ENCODE measurements at regions of chr17 and their contacts with region 1.

Region 1: GRCh38 chr17:29219378-29220047 is 27.1 kb upstream of the CRYBA1 start:
- DNase-seq: peak; percentile 80
- ATAC-seq: peak; percentile 92
- H3K4me3 Mint-ChIP-seq: no peak overlapping the region
- H3K27ac Mint-ChIP-seq: no peak overlapping the region
- H3K4me1 Mint-ChIP-seq: peaks cover 9% of the 10 kb centered on the region
- H3K27me3 Mint-ChIP-seq: peaks cover 3% of the 10 kb centered on the region

Region 2: DNA sequence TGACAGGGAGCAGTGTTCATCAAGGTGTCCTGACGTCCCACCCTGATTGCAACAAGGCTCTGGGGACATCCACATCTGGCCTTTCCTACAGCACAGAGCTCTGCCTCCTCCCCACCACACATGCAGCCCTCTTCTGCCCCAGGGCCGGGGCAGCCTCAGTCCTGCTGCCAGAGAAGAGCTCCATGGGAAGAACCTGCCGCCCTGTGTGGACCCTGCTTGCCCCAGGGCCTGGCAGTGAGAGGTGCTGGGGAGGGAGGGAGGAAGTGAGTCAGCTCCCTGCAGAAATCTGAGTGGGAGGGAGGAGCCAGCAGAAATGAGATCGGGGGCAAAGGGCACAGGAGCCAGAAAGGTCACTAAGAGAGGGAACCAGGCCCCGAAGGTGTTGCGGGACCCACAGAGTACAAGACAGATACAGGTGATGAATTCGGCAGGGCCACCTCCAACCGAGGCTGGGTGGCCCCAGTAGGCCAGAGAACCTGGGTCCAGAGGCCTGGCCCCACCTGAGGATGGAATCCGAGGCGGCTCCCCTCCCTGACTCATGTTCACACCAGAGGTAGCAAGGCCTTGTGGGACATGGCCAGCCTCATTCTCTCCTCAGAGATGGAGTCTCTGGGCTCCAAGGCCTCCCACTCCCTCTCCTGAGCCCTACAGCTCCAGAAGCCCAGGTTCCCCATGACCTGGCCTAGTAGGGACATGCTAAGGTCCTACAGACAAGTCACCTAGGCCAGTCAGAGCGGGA is 64.1 kb before region 1 on chr17:
- CTCF ChIA-PET with region 1: interaction called, 304 read pairs
- DNase-seq: peak; percentile 81
- ATAC-seq: peak; percentile 94
- H3K4me3 Mint-ChIP-seq: peak overlapping the region; percentile 30
- H3K27ac Mint-ChIP-seq: peak overlapping the region; percentile 86
- H3K4me1 Mint-ChIP-seq: peaks cover 50% of the 10 kb centered on the region
- H3K27me3 Mint-ChIP-seq: no peaks in the 10 kb centered on the region

Region 3: GRCh38 chr17:29180034-29180787 is 39.3 kb before region 1 on chr17 and contains the start of gene MYO18A:
- CTCF ChIA-PET with region 1: interaction called, 27 read pairs
- DNase-seq: peak; percentile 84
- ATAC-seq: peak; percentile 94
- H3K4me3 Mint-ChIP-seq: peak within 1 kb of the TSS; percentile 33
- H3K27ac Mint-ChIP-seq: no peak within 1 kb of the TSS
- H3K4me1 Mint-ChIP-seq: peaks cover 34% of the 10 kb centered on the region
- H3K27me3 Mint-ChIP-seq: peaks cover 6% of the 10 kb centered on the region
- total RNA-seq, gene MYO18A: 67.7 to 85.8 TPM

Region 4: GRCh38 chr17:29209073-29209472 is 10.4 kb before region 1 on chr17:
- CTCF ChIA-PET with region 1: interaction called, 17 read pairs
- DNase-seq: no peak
- ATAC-seq: no peak
- H3K4me3 Mint-ChIP-seq: no peak overlapping the region
- H3K27ac Mint-ChIP-seq: no peak overlapping the region
- H3K4me1 Mint-ChIP-seq: no peaks in the 10 kb centered on the region
- H3K27me3 Mint-ChIP-seq: peaks cover 11% of the 10 kb centered on the region

Region 5: DNA sequence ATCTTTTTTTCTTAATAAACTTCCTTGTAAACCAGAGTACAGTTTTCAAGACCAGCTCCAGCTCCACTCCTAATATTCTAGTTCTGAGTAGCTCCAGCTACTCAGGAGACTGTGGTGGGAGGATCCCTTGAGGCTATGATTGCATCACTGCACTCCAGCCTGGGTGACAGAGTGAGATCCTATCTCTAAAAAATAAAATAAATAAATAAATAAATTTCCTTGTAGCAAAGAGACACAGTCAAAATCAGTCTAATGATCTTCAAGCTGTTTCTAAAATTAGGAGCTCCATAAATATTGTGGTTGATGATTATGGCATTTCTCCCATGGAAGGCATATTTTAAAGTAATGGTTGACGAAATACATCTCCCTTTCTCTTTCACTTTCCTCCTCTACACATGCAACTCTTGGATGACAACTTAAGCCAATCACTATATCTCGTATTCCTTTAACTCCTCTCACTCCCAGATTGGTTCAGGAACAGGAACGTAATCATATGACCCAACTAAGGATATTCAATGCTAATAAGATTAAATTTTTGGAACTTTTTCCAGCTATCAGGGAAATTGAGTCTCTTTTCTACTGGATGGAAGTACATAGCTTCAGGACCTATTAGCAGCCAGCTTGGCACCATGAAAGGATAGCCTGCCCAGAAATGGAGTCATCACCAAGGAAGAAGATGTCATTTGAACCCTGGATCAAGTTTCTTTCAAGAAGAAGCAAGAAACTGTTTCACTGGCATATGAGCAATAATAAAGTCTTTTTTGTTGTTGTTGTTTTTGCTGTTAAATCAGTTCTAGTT is 128.5 kb after region 1 on chr17:
- CTCF ChIA-PET with region 1: no interaction called
- DNase-seq: no peak
- ATAC-seq: no peak
- H3K4me3 Mint-ChIP-seq: no peak overlapping the region
- H3K27ac Mint-ChIP-seq: no peak overlapping the region
- H3K4me1 Mint-ChIP-seq: no peaks in the 10 kb centered on the region
- H3K27me3 Mint-ChIP-seq: peaks cover 17% of the 10 kb centered on the region

Region 6: GRCh38 chr17:29369831-29370735 is 150.6 kb after region 1 on chr17:
- CTCF ChIA-PET with region 1: no interaction called
- DNase-seq: peak; percentile 65
- ATAC-seq: peak; percentile 93
- H3K4me3 Mint-ChIP-seq: no peak overlapping the region
- H3K27ac Mint-ChIP-seq: no peak overlapping the region
- H3K4me1 Mint-ChIP-seq: no peaks in the 10 kb centered on the region
- H3K27me3 Mint-ChIP-seq: no peaks in the 10 kb centered on the region

Region 7: DNA sequence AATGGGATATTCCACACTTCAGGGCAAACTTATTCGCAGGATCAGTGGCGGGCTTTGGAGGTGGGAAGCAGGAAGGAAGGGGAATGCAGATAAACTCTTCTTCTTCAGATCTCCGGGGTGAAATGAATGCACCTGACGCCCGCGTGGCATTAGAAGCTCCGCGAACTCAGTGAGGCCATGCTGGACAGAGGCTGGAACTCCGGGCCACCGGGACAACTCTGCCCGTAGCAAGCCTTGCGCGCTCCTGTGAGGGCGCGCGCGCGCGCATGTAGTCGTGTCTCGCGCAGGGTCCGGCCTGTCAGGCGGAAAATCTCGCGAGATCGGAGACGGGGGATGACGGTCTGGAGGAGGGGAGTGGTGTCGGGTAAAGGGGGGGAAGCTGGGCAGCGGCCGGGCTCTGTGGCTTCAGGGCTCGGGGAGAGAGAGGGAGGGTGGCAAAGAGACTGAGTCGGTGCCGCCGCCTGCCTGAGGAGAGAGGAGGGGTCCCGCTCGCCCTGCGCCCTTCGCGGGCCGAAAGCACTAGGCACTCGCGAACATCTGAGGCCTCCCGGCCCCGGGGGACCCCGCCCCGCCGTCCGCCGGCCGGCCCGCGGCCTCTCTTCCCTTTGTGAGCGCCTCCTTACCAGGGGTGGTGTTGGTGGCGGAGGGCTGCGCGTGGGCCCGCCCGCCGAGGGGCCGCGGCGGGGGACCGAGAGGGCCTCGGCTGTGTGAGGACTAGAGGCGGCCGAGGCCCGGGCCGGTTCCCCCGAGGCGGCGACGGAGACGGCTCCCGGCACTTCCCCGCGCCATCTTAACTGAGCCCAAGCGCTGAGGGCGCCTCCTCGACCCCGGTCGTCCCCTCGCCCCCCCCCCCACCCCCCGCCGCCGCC is 170.7 kb after region 1 on chr17 and contains the start of gene TAOK1:
- CTCF ChIA-PET with region 1: no interaction called
- DNase-seq: peak; percentile 99
- ATAC-seq: peak; percentile 93
- H3K4me3 Mint-ChIP-seq: peak within 1 kb of the TSS; percentile 93
- H3K27ac Mint-ChIP-seq: peak within 1 kb of the TSS; percentile 95
- H3K4me1 Mint-ChIP-seq: peaks cover 41% of the 10 kb centered on the region
- H3K27me3 Mint-ChIP-seq: no peaks in the 10 kb centered on the region
- total RNA-seq, gene TAOK1: 41.8 to 58.7 TPM